ENCODE measurements at regions of chr6 and their contacts with region 1.

Region 1: GRCh38 chr6:89610149-89610642 is 28.4 kb downstream of the LYRM2 start:
- DNase-seq: peak; percentile 85

Region 2: GRCh38 chr6:89371849-89372505 is 238.2 kb before region 1 on chr6:
- in situ Hi-C with region 1: no loop called
- DNase-seq: peak; percentile 79

Region 3: GRCh38 chr6:89432875-89433251 is 177.3 kb before region 1 on chr6 and contains the start of gene ANKRD6:
- in situ Hi-C with region 1: loop called (anchors 25 kb)
- DNase-seq: peak; percentile 80

Measured in KBM-7 (cell line).